ENCODE measurements at regions of chr16 and their contacts with region 1.

Region 1: GRCh38 chr16:48623304-48624016 is 13.5 kb upstream of the N4BP1 start:
- DNase-seq: peak; percentile 81
- H3K4me3 Mint-ChIP-seq: peak overlapping the region; percentile 69
- H3K27ac Mint-ChIP-seq: peak overlapping the region; percentile 80
- H3K4me1 Mint-ChIP-seq: peaks cover 46% of the 10 kb centered on the region
- H3K27me3 Mint-ChIP-seq: peaks cover 9% of the 10 kb centered on the region

Region 2: DNA sequence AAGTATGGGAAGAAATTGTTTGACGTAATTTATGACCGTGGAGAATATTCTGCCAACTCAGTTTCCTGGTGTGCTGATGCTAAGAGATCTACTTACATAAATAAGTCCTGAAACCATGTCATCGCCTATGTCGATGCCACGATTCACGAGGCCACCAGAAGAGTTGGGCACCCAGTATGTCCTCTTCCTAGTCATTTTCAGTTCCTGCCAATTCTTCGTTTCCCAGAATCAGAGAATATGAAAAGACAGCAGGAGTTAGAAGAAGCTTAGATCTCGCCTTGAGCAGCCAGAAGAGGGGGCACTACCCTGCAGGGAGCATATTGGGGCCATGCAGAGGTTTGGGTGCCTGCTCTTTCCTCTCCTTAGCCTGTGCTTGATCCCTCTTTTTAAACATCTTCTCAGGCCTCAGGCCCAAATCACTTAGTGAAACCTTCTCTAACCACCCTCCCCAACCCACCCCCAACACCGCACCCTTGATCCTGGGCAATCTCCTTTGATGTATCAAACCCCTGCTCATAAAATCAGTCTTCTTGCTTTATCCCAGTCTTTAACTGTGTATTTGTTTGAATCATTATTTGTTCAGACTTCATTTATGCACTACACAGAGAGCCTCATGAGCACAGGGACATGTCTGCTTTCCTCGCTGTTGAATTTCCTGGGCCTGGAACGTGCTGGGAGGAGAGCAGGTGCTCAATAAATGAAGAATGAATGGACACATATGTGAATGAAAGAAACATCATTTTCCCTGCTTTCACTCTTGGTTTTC is 391.6 kb before region 1 on chr16:
- CTCF ChIA-PET with region 1: interaction called, 10 read pairs
- POLR2A ChIA-PET with region 1: interaction called, 3 read pairs
- DNase-seq: peak; percentile 61
- H3K4me3 Mint-ChIP-seq: no peak overlapping the region
- H3K27ac Mint-ChIP-seq: peak overlapping the region; percentile 81
- H3K4me1 Mint-ChIP-seq: peaks cover 22% of the 10 kb centered on the region
- H3K27me3 Mint-ChIP-seq: no peaks in the 10 kb centered on the region

Region 3: GRCh38 chr16:48353565-48354163 is 269.8 kb before region 1 on chr16:
- CTCF ChIA-PET with region 1: interaction called, 26 read pairs
- POLR2A ChIA-PET with region 1: no interaction called
- DNase-seq: peak; percentile 76
- H3K4me3 Mint-ChIP-seq: no peak overlapping the region
- H3K27ac Mint-ChIP-seq: peak overlapping the region; percentile 72
- H3K4me1 Mint-ChIP-seq: peaks cover 9% of the 10 kb centered on the region
- H3K27me3 Mint-ChIP-seq: no peaks in the 10 kb centered on the region

Region 4: GRCh38 chr16:48365581-48366164 is 257.8 kb before region 1 on chr16:
- CTCF ChIA-PET with region 1: interaction called, 15 read pairs
- POLR2A ChIA-PET with region 1: interaction called, 3 read pairs
- DNase-seq: peak; percentile 84
- H3K4me3 Mint-ChIP-seq: peak overlapping the region; percentile 91
- H3K27ac Mint-ChIP-seq: peak overlapping the region; percentile 99
- H3K4me1 Mint-ChIP-seq: peaks cover 55% of the 10 kb centered on the region
- H3K27me3 Mint-ChIP-seq: no peaks in the 10 kb centered on the region

Region 5: DNA sequence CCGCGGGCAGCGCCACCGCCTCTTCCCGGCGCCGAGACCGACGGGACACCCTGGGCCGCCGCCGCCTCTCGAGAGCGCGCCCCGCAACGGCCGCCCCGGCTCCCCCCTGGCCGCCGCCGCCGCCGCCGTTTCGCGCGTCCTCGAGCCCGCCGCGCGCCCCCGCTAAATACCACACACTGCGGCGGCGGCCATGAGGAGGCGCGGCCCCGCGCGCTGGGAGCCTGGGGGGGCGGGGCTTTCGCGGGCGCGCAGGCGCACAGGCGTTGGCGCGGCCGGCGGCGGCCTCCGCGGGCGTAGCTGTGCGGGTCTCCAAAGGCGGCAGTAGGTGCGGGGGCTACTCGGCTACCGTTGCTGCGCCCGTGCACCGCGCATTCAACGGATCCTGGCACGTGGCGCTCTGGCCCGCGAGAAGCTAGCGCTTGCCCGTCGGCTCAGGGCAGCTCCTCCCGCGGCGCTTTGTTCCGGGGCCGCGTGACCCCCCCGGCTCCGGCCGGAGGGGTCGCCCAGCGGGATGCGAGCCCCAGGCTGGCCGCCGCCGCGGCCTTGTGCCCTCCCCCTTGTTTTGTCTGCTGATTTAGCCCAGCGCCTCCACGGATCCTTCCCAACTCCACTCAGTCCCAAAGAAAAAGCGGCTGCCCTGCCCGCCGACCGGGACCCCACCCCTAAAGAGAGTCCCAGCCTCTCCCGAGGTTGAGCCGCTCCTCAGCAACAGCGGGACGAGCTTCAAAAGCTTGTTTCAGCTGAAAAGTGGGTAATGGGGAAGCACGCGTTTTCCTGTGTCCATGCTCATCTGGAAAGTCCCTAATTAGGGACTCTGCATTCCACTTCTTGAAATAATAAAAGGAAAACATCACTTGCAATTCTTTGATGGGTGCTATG is 237.9 kb before region 1 on chr16 and contains the start of gene SIAH1:
- CTCF ChIA-PET with region 1: interaction called, 12 read pairs
- POLR2A ChIA-PET with region 1: no interaction called
- DNase-seq: peak; percentile 83
- H3K4me3 Mint-ChIP-seq: peak within 1 kb of the TSS; percentile 99
- H3K27ac Mint-ChIP-seq: peak within 1 kb of the TSS; percentile 94
- H3K4me1 Mint-ChIP-seq: peaks cover 21% of the 10 kb centered on the region
- H3K27me3 Mint-ChIP-seq: no peaks in the 10 kb centered on the region
- total RNA-seq, gene SIAH1: 13.5 to 13.7 TPM

Region 6: DNA sequence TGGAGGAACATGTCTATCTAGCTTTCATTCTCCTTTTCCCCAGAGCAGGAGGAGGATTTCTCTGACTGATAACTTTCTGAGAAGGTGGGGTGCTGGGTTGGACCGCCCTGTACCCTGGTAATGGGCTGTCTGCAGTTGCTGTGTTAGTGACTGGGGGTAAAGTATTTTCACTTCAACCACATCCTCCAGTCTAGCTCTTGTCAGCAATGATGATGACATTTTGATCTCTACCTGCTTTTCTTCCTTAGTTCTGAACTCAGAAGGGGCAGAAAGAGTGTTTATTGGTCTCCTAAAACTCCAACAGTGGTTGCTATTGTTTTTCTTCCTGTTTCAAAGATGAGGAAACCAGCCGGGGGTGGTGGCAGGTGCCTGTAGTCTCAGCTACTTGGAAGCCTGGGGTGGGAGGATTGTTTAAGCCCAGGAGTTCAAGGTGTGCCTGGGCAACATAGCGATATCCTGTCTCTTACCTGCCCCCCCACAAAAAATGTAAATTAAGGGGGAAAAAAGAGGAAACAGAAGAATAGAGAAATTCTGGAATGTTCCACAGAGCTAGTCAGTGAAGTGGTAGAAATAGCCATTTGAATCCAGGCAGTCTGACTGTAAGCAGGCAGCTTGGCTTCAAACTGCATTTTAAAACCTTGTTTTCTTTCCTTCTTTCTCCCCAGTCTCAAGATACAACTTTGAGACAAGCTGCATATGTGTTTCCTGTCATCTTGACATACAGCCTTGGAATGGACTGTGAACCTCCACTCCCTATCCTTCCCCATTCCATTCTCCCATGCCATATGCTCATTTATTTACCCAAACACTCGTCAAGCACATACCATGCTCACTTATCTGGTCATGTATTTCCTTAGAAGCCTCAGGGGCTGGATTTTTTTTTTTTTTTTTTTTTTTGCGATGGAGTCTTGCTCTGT is 10.2 kb before region 1 on chr16:
- CTCF ChIA-PET with region 1: interaction called, 39 read pairs
- POLR2A ChIA-PET with region 1: interaction called, 3 read pairs
- DNase-seq: peak; percentile 81
- H3K4me3 Mint-ChIP-seq: peak overlapping the region; percentile 68
- H3K27ac Mint-ChIP-seq: peak overlapping the region; percentile 99
- H3K4me1 Mint-ChIP-seq: peaks cover 66% of the 10 kb centered on the region
- H3K27me3 Mint-ChIP-seq: no peaks in the 10 kb centered on the region

Region 7: GRCh38 chr16:48647794-48648193 is 24.3 kb after region 1 on chr16:
- CTCF ChIA-PET with region 1: no interaction called
- POLR2A ChIA-PET with region 1: no interaction called
- DNase-seq: no peak
- H3K4me3 Mint-ChIP-seq: no peak overlapping the region
- H3K27ac Mint-ChIP-seq: no peak overlapping the region
- H3K4me1 Mint-ChIP-seq: no peaks in the 10 kb centered on the region
- H3K27me3 Mint-ChIP-seq: peaks cover 13% of the 10 kb centered on the region

Region 8: GRCh38 chr16:49755313-49755620 is 1131.8 kb after region 1 on chr16:
- CTCF ChIA-PET with region 1: no interaction called
- POLR2A ChIA-PET with region 1: no interaction called
- DNase-seq: no peak
- H3K4me3 Mint-ChIP-seq: no peak overlapping the region
- H3K27ac Mint-ChIP-seq: no peak overlapping the region
- H3K4me1 Mint-ChIP-seq: peaks cover 9% of the 10 kb centered on the region
- H3K27me3 Mint-ChIP-seq: peaks cover 34% of the 10 kb centered on the region

Measured in activated CD4-positive, alpha-beta T cell treated with anti-CD3 and anti-CD28 coated beads, Interleukin-2, amount 10 ng/mL, durations not matched to agents 7 days and 5 days (primary cell).